Endothelial cell of umbilical vein (primary cell): ENCODE measurements at regions of chr10 and their contacts with region 1.

Region 1: DNA sequence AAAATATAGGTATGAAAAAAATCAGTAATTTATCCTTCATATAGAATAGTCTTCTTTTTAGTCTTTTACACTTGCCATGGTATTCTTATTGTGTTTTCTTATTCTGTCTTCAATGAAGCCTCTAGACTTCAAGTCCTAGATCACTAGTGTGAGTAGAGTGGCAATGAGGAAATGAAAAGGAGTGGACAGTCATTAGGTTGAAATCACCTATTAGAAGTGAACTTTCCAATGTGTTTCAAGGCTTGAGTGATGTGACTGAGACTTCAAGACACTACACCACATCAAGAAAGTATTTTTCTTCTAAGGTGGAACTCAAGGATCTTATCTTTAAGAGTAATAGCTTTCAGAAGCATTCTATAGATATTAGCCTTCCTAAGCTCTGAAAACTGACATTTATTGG is 357.8 kb upstream of the MBL2 start:
- DNase-seq: no peak
- H3K4me3 ChIP-seq: no peak overlapping the region
- H3K27ac ChIP-seq: no peak overlapping the region
- H3K4me1 ChIP-seq: peaks cover 17% of the 10 kb centered on the region
- H3K27me3 ChIP-seq: peaks cover 8 to 36% of the 10 kb centered on the region in 2 experiments
- CTCF ChIP-seq: no peak
- POLR2A ChIP-seq: no peak

Region 2: GRCh38 chr10:53140500-53140899 is 10.2 kb after region 1 on chr10:
- CTCF ChIA-PET with region 1: no interaction called
- POLR2A ChIA-PET with region 1: no interaction called
- dilution Hi-C with region 1: no loop called
- intact Hi-C with region 1: loop called (anchors 2 kb)
- DNase-seq: no peak
- H3K4me3 ChIP-seq: no peak overlapping the region
- H3K27ac ChIP-seq: no peak overlapping the region
- H3K4me1 ChIP-seq: no peaks in the 10 kb centered on the region
- H3K27me3 ChIP-seq: peaks cover 3 to 9% of the 10 kb centered on the region in 2 experiments
- CTCF ChIP-seq: no peak
- POLR2A ChIP-seq: no peak